Sigmoid colon (tissue), 7 donors: ENCODE measurements at regions of chr1 and their contacts with region 1.

Region 1: DNA sequence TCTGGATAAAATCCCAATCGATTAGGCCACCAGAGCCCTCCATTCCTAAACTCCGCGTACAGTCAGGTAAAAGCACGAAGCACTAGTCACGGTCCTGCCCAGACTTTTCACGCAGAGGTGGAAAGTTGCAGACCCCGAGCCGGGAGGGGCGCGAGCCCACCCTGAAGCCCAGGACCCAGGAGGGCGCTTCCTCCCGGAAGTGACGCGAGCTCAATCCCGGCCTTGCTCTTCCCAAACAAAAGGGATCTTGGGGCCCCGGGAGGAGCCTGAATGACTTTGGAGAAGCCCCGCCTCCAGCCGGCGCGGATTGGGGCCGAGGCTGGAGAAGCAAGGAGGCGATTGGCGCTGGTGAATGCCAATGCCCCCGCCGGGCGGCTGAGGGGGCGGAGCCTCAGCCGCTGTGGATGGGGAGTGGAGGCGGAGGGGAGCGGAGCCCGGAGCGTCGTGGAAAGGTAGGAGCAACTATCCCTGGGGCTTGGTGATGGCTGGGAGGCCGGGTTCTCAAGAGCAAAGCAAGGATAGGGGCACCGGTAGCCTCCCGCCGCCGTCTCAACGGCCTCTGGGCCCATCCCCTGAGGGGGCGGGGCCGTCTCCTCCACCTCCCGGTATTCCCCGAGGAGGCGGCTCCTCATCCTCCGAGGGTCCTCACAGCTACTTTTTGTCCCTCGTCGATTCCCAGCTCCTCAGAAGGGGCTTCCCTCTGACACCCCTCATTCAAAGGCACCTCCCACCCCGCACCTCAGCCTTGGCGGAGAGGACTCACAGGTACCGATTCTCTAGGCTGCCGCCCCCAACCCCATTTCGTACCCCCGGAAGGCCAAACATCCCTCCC is at the start of gene CTTNBP2NL:
- DNase-seq: peak; percentile 99
- H3K4me3 ChIP-seq: peak within 1 kb of the TSS; percentile 63 to 94 (median 82)
- H3K27ac ChIP-seq: peak within 1 kb of the TSS; percentile 85 to 91 (median 88)
- H3K4me1 ChIP-seq: peaks cover 0 to 76% (median 53%) of the 10 kb centered on the region in 4 donors
- H3K27me3 ChIP-seq: no peaks in the 10 kb centered on the region
- CTCF ChIP-seq: no peak
- EP300 ChIP-seq: no peak
- POLR2A ChIP-seq: peak; percentile 62 to 65
- total RNA-seq, gene CTTNBP2NL: 15.1 to 25.5 (median 17.0) TPM

Region 2: DNA sequence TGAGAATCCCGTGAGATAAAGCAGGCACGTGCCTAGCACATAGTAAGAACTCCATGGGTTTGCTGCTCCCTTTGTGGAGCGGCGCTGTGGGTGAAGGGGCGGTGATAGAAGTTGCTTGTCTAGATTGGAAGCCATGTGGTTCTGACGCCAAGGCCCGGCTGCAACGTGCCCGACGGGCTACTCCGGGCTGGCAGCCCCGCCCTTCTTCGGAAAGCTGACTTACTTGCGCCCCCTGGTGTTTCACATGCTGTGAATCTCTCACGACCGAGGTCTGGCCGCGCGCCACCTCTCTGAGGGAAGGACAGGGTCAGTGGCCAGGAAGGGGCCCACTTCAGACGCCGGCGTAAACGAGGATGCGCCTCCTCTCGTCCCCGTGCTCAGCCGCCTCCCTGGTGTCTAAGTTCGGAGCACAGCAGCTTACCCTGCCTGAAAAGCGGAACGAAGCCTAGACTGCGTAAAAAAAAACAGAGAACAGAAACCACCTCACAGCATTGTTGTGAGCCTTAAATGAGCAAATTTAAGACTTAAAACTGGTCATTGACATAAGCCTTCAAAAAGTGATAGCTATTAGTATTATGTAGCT is 70.1 kb after region 1 on chr1:
- intact Hi-C with region 1: loop called (anchors 1 kb)
- DNase-seq: peak; percentile 98
- H3K4me3 ChIP-seq: peak overlapping the region; percentile 19 to 43 (median 38)
- H3K27ac ChIP-seq: peak overlapping the region; percentile 73 to 81 (median 77)
- H3K4me1 ChIP-seq: peaks cover 0 to 17% (median 13%) of the 10 kb centered on the region in 4 donors
- H3K27me3 ChIP-seq: no peaks in the 10 kb centered on the region
- CTCF ChIP-seq: peak; percentile 76 to 95 (median 88)
- EP300 ChIP-seq: peak in 1 of 4 donors; percentile 2
- POLR2A ChIP-seq: no peak

Region 3: DNA sequence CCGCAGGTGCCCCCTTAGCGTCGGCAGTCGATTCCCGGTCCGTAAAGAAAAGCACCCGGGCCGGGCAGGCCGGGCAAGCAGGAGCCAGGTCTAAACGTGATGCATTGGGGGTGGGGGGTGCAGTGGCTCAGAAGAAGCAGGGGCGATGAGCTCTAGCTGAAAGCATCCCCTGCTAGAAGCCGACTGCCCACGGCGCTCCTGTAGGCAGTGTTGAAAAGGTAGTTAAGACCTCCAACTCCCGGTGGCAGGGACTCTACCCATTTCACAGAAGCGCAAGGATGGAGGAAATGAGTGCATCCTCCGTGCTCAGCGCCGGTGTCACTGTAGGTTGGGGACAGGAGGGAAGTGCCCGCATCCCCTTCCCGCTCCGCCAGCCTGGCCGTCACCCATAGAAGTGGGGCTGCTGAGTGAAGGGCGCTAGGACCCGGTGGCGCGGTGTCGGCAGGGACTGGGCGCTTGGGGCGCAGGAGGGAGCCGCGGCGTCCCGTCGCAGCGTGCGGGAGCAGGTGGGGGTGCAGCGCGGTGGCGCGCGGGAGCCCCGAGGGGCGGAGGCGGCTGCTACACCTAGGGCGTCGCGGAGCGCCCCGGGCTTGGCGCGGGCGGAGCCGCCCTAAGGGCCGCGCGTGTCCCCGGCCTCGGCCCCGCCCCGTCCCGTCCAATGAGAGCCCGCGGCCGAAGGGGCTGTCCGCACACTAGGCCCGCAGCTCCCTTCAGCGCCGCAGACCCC is 112.4 kb after region 1 on chr1 and contains the start of gene WNT2B:
- intact Hi-C with region 1: no loop called
- DNase-seq: no peak
- H3K4me3 ChIP-seq: peak within 1 kb of the TSS; percentile 17 to 54 (median 46)
- H3K27ac ChIP-seq: peak within 1 kb of the TSS in 3 of 4 donors; percentile 1 to 23 (median 14)
- H3K4me1 ChIP-seq: peaks cover 0 to 19% (median 18%) of the 10 kb centered on the region in 4 donors
- H3K27me3 ChIP-seq: peaks cover 18 to 56% (median 30%) of the 10 kb centered on the region in 3 donors
- CTCF ChIP-seq: no peak
- EP300 ChIP-seq: no peak
- POLR2A ChIP-seq: no peak
- total RNA-seq, gene WNT2B: 1.5 to 4.2 (median 2.0) TPM

Region 4: DNA sequence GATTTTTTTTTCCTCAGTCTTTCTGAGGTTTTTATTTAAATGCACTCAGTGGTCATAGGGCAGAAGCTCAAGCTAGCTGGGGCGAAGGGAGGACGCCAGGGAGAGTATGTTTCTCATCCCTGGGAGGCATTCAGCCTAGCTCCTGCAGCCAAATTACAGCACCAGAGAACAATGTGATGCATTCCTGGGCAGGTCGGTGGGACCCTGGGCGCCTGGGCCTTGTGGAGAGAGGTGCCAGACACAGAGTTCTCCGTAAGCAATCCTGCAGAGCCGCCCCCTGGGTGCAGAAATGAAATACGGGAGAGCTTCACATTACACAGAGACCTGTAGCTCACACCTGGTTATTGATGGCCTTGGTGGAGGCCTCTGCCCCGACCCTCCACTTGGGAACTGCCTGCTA is 128.2 kb after region 1 on chr1:
- intact Hi-C with region 1: no loop called
- DNase-seq: no peak
- H3K4me3 ChIP-seq: no peak overlapping the region
- H3K27ac ChIP-seq: no peak overlapping the region
- H3K4me1 ChIP-seq: peaks cover 0 to 27% (median 5%) of the 10 kb centered on the region in 4 donors
- H3K27me3 ChIP-seq: no peaks in the 10 kb centered on the region
- CTCF ChIP-seq: no peak
- EP300 ChIP-seq: no peak
- POLR2A ChIP-seq: no peak

Region 5: GRCh38 chr1:112619520-112620376 is 223.7 kb after region 1 on chr1 and contains the start of gene CAPZA1:
- intact Hi-C with region 1: loop called (anchors 2 kb)
- DNase-seq: peak; percentile 96
- H3K4me3 ChIP-seq: peak within 1 kb of the TSS; percentile 63 to 97 (median 90)
- H3K27ac ChIP-seq: peak within 1 kb of the TSS; percentile 94 to 99 (median 96)
- H3K4me1 ChIP-seq: peaks cover 0 to 42% (median 36%) of the 10 kb centered on the region in 4 donors
- H3K27me3 ChIP-seq: no peaks in the 10 kb centered on the region
- CTCF ChIP-seq: no peak
- EP300 ChIP-seq: peak in 3 of 4 donors; percentile 1 to 47 (median 8)
- POLR2A ChIP-seq: peak; percentile 86 to 88
- total RNA-seq, gene CAPZA1: 75.9 to 90.6 (median 81.3) TPM